GM12878 (cell line): ENCODE measurements at regions of chr6 and their contacts with region 1.

Region 1: DNA sequence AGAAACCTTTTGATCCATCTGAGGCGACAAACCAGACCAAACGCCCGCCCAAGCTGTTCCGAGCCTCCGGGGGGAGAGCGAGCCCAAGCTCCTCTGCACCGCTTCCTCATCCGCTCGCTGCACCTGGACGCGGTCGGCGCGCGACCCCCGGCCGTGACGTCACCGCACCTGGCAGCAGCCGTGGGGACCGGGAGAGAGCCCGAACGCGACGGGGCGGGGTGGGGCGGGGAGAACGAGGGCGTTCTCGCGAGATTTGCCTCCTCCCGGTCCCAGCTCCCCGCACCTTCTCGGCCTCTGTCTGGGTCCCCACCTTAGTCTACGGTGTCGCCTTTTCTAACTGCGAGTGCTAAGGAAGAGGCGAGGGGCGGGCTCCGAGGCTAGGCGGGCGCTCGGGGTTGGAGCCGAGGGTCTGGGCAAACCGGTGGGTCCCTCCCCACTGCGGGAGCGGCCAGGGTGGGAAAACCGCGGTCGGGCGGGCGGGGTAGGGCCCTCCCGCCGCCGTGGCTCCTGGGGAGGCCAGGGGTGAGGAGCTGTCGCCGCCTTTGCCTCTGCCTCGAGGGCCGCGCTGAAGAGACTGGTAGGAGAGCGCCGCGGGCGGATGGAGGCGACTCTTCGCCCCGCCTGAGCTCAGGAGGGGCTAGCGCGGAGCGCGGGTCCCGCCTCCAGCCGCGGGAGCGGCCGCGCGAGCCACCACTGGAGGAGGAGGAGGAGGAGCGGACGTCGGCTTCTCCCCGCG is at the start of gene CD2AP:
- DNase-seq: peak; percentile 65
- ATAC-seq: peak; percentile 85
- H3K4me3 ChIP-seq: peak within 1 kb of the TSS; percentile 98
- H3K27ac ChIP-seq: peak within 1 kb of the TSS; percentile 92
- H3K4me1 ChIP-seq: no peaks in the 10 kb centered on the region; the same call in 1 of the 2 replicates
- H3K27me3 ChIP-seq: no peaks in the 10 kb centered on the region
- CTCF ChIP-seq: peak; percentile 14 to 29 (median 25); a peak in 4 of 6 replicates
- EP300 ChIP-seq: 0 out of 4 replicates have a peak, but pooled peaks of 1 of the 2 experiments have one; percentile 17
- POLR2A ChIP-seq: peak; percentile 91
- RAD21 ChIP-seq: peak; percentile 24; the same call in 1 of the 2 replicates
- polyA plus RNA-seq, gene CD2AP: 5.4 to 8.0 TPM

Region 2: DNA sequence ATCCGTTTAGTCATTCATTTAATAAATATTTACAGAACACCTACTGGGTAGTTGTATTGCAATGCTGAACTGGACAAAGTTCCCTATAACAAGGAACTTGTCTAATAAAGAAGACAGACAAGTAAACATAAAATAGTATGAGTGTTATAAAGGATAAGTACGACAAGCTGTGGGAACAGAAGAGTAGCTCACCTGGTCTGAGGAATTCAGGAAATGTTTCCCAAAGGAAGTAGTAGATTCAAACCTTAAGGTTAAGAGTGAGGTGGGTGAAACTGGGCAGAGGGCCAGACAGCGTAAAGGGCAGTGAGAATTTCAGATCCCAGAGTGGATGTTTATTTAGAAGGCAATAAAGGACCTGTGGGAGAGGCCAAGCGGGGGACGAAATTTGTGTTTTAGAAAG is 72.4 kb before region 1 on chr6:
- CTCF ChIA-PET with region 1: no interaction called
- POLR2A ChIA-PET with region 1: no interaction called
- RAD21 ChIA-PET with region 1: no interaction called
- SMC1A ChIA-PET with region 1: no interaction called
- in situ Hi-C with region 1: no loop called
- intact Hi-C with region 1: no loop called
- DNase-seq: no peak
- ATAC-seq: no peak
- H3K4me3 ChIP-seq: no peak overlapping the region
- H3K27ac ChIP-seq: no peak overlapping the region
- H3K4me1 ChIP-seq: no peaks in the 10 kb centered on the region
- H3K27me3 ChIP-seq: no peaks in the 10 kb centered on the region; a peak in 1 of 4 replicates
- CTCF ChIP-seq: no peak
- EP300 ChIP-seq: no peak
- POLR2A ChIP-seq: no peak
- RAD21 ChIP-seq: no peak

Region 3: DNA sequence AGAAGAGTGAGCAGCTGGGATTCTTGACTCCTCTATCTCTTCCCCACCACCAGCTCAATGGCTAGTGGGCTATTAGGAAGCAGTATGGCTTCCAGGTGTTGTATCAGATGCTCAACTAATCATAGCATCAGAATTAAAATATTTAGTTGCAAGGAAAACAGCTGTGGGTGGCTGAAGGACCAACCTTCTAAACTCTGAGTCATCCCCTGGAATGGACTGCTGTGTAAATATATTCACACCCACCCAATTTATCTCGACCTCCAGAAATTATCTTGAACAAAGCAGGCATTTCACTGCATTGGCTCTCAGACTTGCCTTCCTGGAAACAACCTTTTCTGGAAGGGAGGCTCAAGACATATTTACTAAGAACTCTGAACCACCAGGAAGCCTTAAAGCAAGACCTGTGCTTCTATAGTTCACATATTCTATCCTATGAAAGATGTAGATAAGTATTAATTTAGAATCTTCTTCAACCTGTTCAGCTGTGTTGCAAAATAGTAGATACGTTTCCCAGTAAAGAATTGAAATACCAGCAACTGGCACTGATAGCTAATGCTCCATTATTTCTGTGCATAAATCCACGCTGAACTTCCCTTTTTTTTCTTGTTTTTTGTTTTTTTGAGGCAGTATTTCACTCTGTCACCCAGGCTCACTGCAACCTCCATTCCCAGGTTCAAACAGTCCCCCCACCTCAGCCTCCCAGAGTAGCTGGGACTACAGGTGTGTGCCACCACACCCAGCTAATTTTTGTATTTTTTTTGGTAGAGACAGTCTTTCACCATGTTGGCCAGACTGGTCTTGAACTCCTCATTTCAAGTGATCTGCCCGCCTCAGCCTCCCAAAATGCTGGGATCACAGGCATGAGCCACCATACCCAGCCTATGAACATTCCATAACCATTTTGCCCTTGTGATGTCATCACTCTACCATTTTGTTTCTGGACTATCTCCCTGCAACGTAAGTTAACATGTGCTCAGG is 57.0 kb before region 1 on chr6:
- CTCF ChIA-PET with region 1: interaction called, 8 read pairs
- POLR2A ChIA-PET with region 1: interaction called, 4 read pairs
- RAD21 ChIA-PET with region 1: interaction called, 58 read pairs
- SMC1A ChIA-PET with region 1: interaction called, 47 read pairs
- in situ Hi-C with region 1: no loop called
- intact Hi-C with region 1: no loop called
- DNase-seq: no peak
- ATAC-seq: no peak
- H3K4me3 ChIP-seq: no peak overlapping the region
- H3K27ac ChIP-seq: no peak overlapping the region
- H3K4me1 ChIP-seq: no peaks in the 10 kb centered on the region
- H3K27me3 ChIP-seq: no peaks in the 10 kb centered on the region
- CTCF ChIP-seq: no peak
- EP300 ChIP-seq: no peak
- POLR2A ChIP-seq: no peak
- RAD21 ChIP-seq: no peak

Region 4: GRCh38 chr6:47440719-47441118 is 36.9 kb before region 1 on chr6:
- CTCF ChIA-PET with region 1: interaction called, 3 read pairs
- POLR2A ChIA-PET with region 1: interaction called, 3 read pairs
- RAD21 ChIA-PET with region 1: interaction called, 22 read pairs
- SMC1A ChIA-PET with region 1: interaction called, 9 read pairs
- in situ Hi-C with region 1: no loop called
- intact Hi-C with region 1: loop called (anchors 2 kb)
- DNase-seq: peak; percentile 47
- ATAC-seq: peak; percentile 76
- H3K4me3 ChIP-seq: no peak overlapping the region; the same call in 1 of the 2 replicates
- H3K27ac ChIP-seq: 0 out of 2 replicates have a peak overlapping the region, but pooled peaks have one; percentile 32
- H3K4me1 ChIP-seq: peaks cover 36% of the 10 kb centered on the region
- H3K27me3 ChIP-seq: no peaks in the 10 kb centered on the region
- CTCF ChIP-seq: no peak
- EP300 ChIP-seq: no peak; a peak in 1 of 4 replicates
- POLR2A ChIP-seq: no peak
- RAD21 ChIP-seq: no peak

Region 5: DNA sequence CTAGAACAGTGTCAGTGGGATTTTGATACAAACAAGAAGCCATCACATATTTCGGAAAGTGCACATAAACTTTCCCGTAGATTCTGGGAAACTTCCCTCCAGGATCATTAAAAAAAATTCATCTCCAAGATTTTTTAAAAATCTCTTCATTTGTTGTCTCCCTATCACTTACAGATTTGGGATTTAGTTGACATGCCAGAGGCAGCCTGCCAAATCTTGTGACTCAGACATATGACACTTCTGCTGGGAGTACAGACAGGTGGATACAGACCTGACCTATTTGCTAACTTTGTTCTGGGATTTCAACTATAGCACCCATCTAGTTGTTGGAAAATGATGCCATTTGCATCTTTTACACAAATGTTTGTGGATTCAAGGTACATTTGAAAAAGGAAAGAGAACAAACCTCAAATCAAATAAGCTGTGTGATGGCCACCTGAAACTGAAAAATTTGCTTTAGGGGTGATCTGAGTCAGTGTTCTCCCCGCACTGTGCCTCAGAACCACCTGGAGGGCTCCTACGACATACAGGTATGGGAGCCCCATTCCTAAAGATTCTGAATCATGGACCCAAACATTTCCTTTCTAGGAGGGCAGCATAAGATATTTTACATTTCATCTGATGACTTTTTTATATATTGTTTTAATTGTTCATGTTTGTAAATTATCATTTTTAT is 22.0 kb before region 1 on chr6:
- CTCF ChIA-PET with region 1: interaction called, 5 read pairs
- POLR2A ChIA-PET with region 1: interaction called, 21 read pairs
- RAD21 ChIA-PET with region 1: interaction called, 14 read pairs
- SMC1A ChIA-PET with region 1: interaction called, 25 read pairs
- in situ Hi-C with region 1: no loop called
- intact Hi-C with region 1: no loop called
- DNase-seq: no peak
- ATAC-seq: peak; percentile 87
- H3K4me3 ChIP-seq: peak overlapping the region; percentile 13; the same call in 1 of the 2 replicates
- H3K27ac ChIP-seq: no peak overlapping the region
- H3K4me1 ChIP-seq: peaks cover 25% of the 10 kb centered on the region
- H3K27me3 ChIP-seq: no peaks in the 10 kb centered on the region
- CTCF ChIP-seq: no peak
- EP300 ChIP-seq: no peak
- POLR2A ChIP-seq: no peak
- RAD21 ChIP-seq: no peak

Region 6: GRCh38 chr6:47495954-47496545 is 18.4 kb after region 1 on chr6:
- CTCF ChIA-PET with region 1: interaction called, 3 read pairs
- POLR2A ChIA-PET with region 1: interaction called, 5 read pairs
- RAD21 ChIA-PET with region 1: interaction called, 9 read pairs
- SMC1A ChIA-PET with region 1: interaction called, 10 read pairs
- in situ Hi-C with region 1: no loop called
- intact Hi-C with region 1: no loop called
- DNase-seq: no peak
- ATAC-seq: no peak
- H3K4me3 ChIP-seq: no peak overlapping the region
- H3K27ac ChIP-seq: no peak overlapping the region
- H3K4me1 ChIP-seq: 0 out of 2 replicates have a peak, but pooled peaks cover under 1% of the 10 kb centered on the region
- H3K27me3 ChIP-seq: no peaks in the 10 kb centered on the region
- CTCF ChIP-seq: no peak
- EP300 ChIP-seq: no peak
- POLR2A ChIP-seq: no peak
- RAD21 ChIP-seq: no peak